ENCODE measurements at regions of chr10 and their contacts with region 1.

Region 1: DNA sequence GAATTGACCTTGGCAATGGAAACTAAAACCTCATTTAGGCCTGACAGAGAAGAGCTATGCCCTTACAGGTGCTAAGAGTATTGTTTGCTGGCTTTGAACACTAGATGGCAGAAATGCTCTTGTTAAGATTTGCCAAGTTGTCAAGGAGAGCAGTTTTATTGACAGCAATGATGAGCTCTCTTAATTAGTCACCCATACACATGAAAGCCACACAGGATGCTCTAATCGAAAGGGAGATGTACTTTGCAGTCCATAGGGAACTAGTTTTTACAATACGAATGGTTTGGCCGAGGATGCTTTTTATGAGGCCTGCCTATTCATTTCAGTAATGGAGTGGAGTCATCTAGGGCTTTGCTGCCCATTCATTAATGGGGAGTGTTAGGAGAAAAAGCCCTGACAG is 45.4 kb upstream of the MBL2 start:
- DNase-seq: no peak
- H3K4me3 ChIP-seq: no peak overlapping the region
- H3K27ac ChIP-seq: no peak overlapping the region
- H3K27me3 ChIP-seq: no peaks in the 10 kb centered on the region
- CTCF ChIP-seq: peak; percentile 69

Region 2: DNA sequence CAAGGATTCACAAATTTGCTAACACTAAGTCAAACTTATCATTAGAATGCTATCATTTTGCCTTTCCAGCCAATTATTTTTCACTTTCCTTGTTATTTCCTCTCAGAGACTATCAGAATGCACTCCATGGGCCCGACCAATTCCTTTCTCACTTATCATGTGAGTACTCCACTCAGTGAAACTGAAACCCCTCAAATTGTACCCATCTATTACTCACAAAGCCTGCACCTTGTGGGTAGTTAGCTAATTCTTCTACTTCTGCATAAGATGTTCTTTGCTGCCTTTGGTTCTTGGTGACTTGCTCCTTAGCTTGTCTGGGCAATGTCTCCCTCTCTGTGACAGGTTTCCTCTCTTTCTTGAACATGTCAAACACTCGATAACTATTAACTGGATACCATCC is 10.2 kb before region 1 on chr10:
- CTCF ChIA-PET with region 1: interaction called, 15 read pairs
- POLR2A ChIA-PET with region 1: no interaction called
- DNase-seq: no peak
- H3K4me3 ChIP-seq: no peak overlapping the region
- H3K27ac ChIP-seq: no peak overlapping the region
- H3K27me3 ChIP-seq: no peaks in the 10 kb centered on the region
- CTCF ChIP-seq: no peak